ENCODE measurements at regions of chr7 and their contacts with region 1.

Region 1: GRCh38 chr7:112103246-112103645 is 103.0 kb downstream of the DOCK4 start:
- DNase-seq: peak in 1 of 42 donors; percentile 0

Region 2: GRCh38 chr7:111992601-111993000 is 110.6 kb before region 1 on chr7:
- intact Hi-C with region 1: loop called (anchors 10 kb)
- DNase-seq: no peak

Region 3: DNA sequence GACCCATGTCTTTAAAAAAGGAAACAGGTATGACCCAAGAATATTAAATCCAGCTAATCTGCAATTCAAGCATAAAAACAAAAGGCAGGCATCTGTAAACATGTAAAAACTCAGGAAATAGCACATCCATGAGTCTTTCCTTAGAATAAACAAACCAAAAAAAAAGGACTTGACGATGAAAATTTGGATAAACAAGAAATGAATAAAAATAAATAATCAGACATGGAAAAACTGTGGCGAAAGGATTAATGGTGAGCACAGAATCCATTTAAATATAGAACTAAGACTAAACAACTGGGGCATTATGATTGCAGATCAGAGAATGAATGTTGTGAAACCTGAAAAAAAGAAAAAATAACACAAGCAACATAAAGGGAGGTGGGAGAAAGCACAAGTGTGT is 67.2 kb before region 1 on chr7:
- intact Hi-C with region 1: no loop called
- DNase-seq: no peak

Region 4: DNA sequence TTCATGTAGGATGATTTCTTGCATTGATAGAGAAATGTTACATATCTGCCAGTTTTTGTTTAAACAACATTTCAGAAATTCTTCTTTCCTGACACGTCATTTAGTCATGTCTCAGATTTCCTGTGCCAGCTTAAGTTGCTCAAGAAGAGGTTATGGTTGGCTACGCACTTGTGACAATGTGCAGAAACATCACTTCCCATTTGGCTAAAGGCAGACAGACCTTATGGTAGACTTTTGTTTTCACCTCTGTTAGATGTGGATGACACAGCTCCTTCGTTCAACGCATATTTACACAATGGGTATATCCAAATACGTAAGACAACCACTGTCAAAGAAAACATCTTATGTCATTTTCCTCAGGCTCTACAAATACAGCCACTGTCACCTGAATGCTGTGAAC is 22.8 kb before region 1 on chr7:
- intact Hi-C with region 1: no loop called
- DNase-seq: peak in 1 of 42 donors; percentile 31